Right ventricle myocardium superior (tissue), 1 donor: ENCODE measurements at regions of chr7 and their contacts with region 1.

Region 1: GRCh38 chr7:76020031-76020714 is 25.8 kb upstream of the TMEM120A start:
- DNase-seq: peak; percentile 87
- ATAC-seq: peak; percentile 91

Region 2: GRCh38 chr7:75866489-75867389 is 153.4 kb before region 1 on chr7:
- intact Hi-C with region 1: loop called (anchors 1 kb)
- DNase-seq: peak; percentile 67
- ATAC-seq: peak; percentile 92